Right ventricle myocardium superior (tissue), 1 donor: ENCODE measurements at regions of chr6 and their contacts with region 1.

Region 1: GRCh38 chr6:163579880-163580295 is 165.4 kb downstream of the QKI start:
- DNase-seq: no peak
- ATAC-seq: peak; percentile 37

Region 2: DNA sequence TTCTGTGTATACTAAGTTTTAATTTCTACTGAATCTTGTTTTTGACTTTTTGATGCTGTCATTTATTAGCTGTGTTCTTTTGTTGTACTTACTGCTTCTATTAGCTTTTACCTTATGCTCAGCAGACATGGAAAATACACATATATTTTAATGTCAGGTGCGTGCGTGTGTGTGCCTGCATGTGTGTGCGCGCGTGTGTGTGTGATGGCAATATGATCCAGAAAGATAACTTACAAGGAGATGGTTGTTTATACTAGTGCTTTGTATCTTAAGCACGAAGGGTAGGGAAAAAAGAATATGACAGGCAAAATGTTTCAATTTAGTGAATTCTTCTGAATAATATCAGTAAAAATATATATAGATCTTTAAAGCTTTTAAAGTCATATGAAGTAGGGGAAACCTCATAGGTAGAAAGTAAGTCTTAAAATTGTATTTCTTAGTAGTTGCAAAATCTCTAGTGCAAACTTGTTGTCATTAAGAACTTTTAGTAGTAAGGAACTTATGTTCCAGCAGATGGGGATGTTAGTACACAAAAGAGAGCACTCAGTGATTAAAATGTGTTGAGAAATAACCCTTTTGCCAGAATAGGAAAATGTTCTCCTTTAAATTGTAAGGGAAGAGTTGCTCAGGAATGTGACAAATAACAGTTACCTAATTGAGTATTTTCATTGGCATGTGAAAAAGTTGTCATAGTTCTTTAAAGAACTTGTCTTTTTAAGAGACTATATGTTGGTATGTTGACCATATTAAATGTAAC is 152.2 kb before region 1 on chr6:
- intact Hi-C with region 1: loop called (anchors 10 kb)
- DNase-seq: no peak
- ATAC-seq: peak; percentile 40